ENCODE measurements at regions of chr12 and their contacts with region 1.

Region 1: DNA sequence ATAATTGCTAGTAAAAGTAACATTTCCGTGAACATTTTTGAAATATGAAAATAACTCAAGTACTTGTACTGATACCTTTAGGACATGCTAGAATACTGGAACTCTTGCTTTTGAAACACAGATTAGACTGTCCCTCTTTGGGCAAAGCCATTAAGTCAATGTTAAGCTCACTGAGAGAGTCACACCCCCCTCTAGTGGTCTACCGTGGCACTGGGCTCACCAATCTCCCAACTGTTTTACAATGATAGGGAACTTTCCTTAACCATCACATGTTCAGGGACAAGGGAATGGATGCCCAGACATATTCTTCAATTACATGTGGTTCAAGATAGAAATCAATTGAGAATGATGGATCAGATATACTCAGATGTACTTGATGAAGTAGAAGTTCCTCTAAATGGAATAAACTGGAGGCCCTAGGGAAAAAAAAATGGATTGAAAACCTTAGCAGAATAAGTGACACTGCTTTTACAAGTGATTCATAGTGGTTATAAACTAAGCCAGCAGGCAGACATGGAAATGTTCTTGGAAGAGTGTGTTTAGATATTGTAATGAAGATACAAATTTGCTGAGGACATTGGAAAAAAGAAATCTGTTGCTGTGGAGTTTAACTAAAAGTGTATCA is 17.8 kb downstream of the NANOG start:
- DNase-seq: peak; percentile 42
- ATAC-seq: peak; percentile 56

Region 2: GRCh38 chr12:7678738-7679137 is 128.2 kb before region 1 on chr12:
- intact Hi-C with region 1: loop called (anchors 5 kb)
- DNase-seq: no peak
- ATAC-seq: no peak

Region 3: DNA sequence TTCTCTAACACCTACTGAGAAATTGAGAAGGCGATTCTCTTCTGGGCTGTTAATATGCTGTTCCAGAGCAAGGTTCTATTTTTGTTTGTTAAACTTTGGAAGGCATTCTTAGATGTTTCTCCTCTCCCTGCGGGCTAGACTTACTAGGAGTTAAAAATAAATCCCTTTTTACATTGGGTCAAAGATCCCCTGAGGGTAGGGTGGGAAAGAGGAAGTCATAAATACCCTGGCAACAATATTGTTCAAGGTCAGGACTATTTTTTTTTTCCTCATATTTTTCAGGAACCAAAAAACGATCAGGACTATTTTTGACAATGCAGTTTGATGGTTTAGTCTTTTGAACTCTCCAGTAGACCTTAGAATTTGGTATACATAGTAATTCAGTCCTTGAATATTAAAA is 77.7 kb after region 1 on chr12:
- intact Hi-C with region 1: no loop called
- DNase-seq: no peak
- ATAC-seq: peak; percentile 21

Measured in left ventricle myocardium superior (tissue), 1 donor.